Naive thymus-derived CD4-positive, alpha-beta T cell (primary cell): ENCODE measurements at regions of chr1 and their contacts with region 1.

Region 1: GRCh38 chr1:230957580-230957989 is 21.1 kb downstream of the TTC13 start:
- DNase-seq: no peak
- ATAC-seq: no peak
- H3K4me3 ChIP-seq: no peak overlapping the region
- H3K4me3 Mint-ChIP-seq: no peak overlapping the region
- H3K27ac ChIP-seq: no peak overlapping the region
- H3K27ac Mint-ChIP-seq: no peak overlapping the region
- H3K4me1 ChIP-seq: no peaks in the 10 kb centered on the region
- H3K4me1 Mint-ChIP-seq: peaks cover 5 to 36% (median 26%) of the 10 kb centered on the region in 7 donors
- H3K27me3 ChIP-seq: no peaks in the 10 kb centered on the region
- H3K27me3 Mint-ChIP-seq: no peaks in the 10 kb centered on the region

Region 2: GRCh38 chr1:230317823-230318819 is 639.5 kb before region 1 on chr1:
- CTCF ChIA-PET with region 1: no interaction called
- POLR2A ChIA-PET with region 1: no interaction called
- intact Hi-C with region 1: no loop called
- DNase-seq: no peak
- ATAC-seq: no peak
- H3K4me3 ChIP-seq: no peak overlapping the region
- H3K4me3 Mint-ChIP-seq: no peak overlapping the region
- H3K27ac ChIP-seq: no peak overlapping the region
- H3K27ac Mint-ChIP-seq: no peak overlapping the region
- H3K4me1 ChIP-seq: no peaks in the 10 kb centered on the region
- H3K4me1 Mint-ChIP-seq: no peaks in the 10 kb centered on the region
- H3K27me3 ChIP-seq: no peaks in the 10 kb centered on the region
- H3K27me3 Mint-ChIP-seq: peaks cover 4 to 9% (median 7%) of the 10 kb centered on the region in 5 donors

Region 3: GRCh38 chr1:230581446-230582079 is 376.0 kb before region 1 on chr1:
- CTCF ChIA-PET with region 1: no interaction called
- POLR2A ChIA-PET with region 1: no interaction called
- intact Hi-C with region 1: no loop called
- DNase-seq: no peak
- ATAC-seq: no peak
- H3K4me3 ChIP-seq: no peak overlapping the region
- H3K4me3 Mint-ChIP-seq: no peak overlapping the region
- H3K27ac ChIP-seq: no peak overlapping the region
- H3K27ac Mint-ChIP-seq: no peak overlapping the region
- H3K4me1 ChIP-seq: no peaks in the 10 kb centered on the region
- H3K4me1 Mint-ChIP-seq: no peaks in the 10 kb centered on the region
- H3K27me3 ChIP-seq: no peaks in the 10 kb centered on the region
- H3K27me3 Mint-ChIP-seq: peaks cover 10 to 46% (median 36%) of the 10 kb centered on the region in 5 donors

Region 4: DNA sequence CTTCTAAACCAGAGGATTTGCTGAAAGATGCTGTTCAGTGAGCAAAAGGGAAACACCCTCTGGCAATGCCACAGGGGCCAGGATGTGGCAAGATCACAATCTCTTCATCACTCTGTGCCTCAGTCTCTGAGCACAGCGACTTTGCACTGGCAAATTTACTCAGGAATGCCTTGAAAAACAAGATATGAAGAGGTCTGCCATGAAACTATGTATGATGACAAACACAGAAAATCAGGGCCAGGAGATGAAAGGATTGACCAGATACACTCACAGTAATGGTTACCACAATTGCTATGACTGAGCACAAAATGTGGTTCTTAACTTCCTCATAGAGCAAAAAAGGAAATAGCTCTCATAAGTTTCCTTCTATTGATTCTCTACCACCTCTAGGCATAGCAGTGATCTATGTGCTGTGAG is 15.3 kb after region 1 on chr1:
- CTCF ChIA-PET with region 1: no interaction called
- POLR2A ChIA-PET with region 1: interaction called, 5 read pairs
- intact Hi-C with region 1: loop called in 1 of 2 experiments (anchors 2 kb)
- DNase-seq: peak; percentile 21 to 87 (median 82)
- ATAC-seq: peak; percentile 88
- H3K4me3 ChIP-seq: peak overlapping the region; percentile 12
- H3K4me3 Mint-ChIP-seq: peak overlapping the region; percentile 0 to 82 (median 69)
- H3K27ac ChIP-seq: peak overlapping the region; percentile 63
- H3K27ac Mint-ChIP-seq: peak overlapping the region; percentile 25 to 96 (median 86)
- H3K4me1 ChIP-seq: peaks cover 48 to 51% of the 10 kb centered on the region in 2 donors
- H3K4me1 Mint-ChIP-seq: peaks cover 60 to 93% (median 78%) of the 10 kb centered on the region in 7 donors
- H3K27me3 ChIP-seq: no peaks in the 10 kb centered on the region
- H3K27me3 Mint-ChIP-seq: no peaks in the 10 kb centered on the region